Body of pancreas (tissue), 4 donors: ENCODE measurements at regions of chr19 and their contacts with region 1.

Region 1: GRCh38 chr19:11137542-11138384 is 17.8 kb downstream of the SPC24 start:
- DNase-seq: peak; percentile 78 to 88 (median 83)
- ATAC-seq: peak; percentile 60
- H3K4me3 ChIP-seq: no peak overlapping the region
- H3K27ac ChIP-seq: peak overlapping the region; percentile 61 to 85 (median 71)
- H3K4me1 ChIP-seq: peaks cover 53% of the 10 kb centered on the region
- H3K27me3 ChIP-seq: no peaks in the 10 kb centered on the region
- CTCF ChIP-seq: peak; percentile 70 to 95 (median 89)
- POLR2A ChIP-seq: no peak

Region 2: DNA sequence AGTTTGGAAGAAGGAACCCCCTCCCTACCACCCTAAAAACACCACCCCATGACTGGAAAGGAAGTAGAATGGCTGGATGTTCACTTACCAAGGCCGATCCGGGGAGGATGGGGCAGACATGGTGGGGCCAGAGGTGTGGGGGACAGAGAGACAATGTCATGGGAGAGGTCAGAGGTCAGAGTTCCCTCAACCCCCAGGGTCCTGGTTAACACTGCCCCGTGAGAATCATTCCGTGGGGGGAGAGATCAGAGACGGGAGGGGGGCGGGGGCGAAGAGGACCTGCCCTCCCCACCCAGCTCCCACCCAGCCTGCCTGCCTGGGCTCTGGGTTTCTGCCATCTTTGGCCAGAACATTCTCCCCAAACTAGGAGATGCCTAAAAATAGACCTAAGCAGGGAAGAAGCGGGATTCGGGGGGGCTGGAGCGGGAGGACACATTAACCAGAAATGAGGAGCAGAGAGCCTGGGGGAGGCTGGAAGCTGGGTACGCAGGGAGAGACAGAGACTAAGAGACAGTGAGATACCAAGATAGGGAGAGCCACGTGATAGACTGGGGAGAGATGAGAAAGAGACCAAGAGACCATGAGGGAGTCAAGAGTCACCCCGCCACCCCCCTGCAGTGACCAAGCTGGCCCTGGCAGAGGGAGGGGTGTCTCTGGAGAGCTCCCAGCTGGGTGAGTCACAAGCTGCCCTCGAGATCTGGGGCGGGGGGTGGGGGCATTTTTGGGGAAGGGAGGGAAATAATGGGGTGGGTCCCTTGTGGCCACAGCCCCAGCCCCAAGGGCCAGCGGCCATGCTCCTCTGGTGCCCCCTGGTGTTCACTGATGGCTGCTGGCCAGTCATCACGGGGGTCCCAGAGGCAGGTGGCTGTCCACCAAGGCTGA is 65.7 kb after region 1 on chr19:
- intact Hi-C with region 1: loop called (anchors 2 kb)
- DNase-seq: peak; percentile 60 to 66 (median 62)
- ATAC-seq: peak; percentile 65
- H3K4me3 ChIP-seq: no peak overlapping the region
- H3K27ac ChIP-seq: peak overlapping the region in 3 of 4 donors; percentile 34 to 61 (median 43)
- H3K4me1 ChIP-seq: peaks cover 38% of the 10 kb centered on the region
- H3K27me3 ChIP-seq: no peaks in the 10 kb centered on the region
- CTCF ChIP-seq: peak; percentile 62 to 85 (median 76)
- POLR2A ChIP-seq: no peak